ENCODE measurements at regions of chr11 and their contacts with region 1.

Region 1: DNA sequence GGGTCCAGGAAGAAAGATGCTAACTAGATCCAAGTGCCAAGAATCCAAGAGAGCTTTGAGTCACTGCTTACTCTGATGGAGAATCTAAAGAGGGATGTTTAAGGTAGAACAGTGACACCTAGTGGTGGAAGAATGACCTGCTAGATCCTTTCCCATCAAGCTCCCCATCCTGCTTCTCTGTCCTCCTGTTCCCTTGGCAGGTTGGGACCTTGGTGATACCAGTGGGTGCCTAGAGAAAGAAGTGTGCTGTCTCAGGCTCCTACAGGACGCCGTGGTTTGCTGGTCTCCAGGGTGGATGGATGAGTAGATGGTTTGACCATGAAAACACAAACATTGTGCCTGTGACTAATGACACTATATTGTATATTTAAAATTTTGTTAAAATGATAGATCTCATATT is 383.7 kb downstream of the TMEM135 start:
- DNase-seq: no peak
- H3K4me3 ChIP-seq: no peak overlapping the region
- H3K27ac ChIP-seq: no peak overlapping the region
- H3K4me1 ChIP-seq: no peaks in the 10 kb centered on the region
- H3K27me3 ChIP-seq: no peaks in the 10 kb centered on the region
- CTCF ChIP-seq: peak; percentile 58 to 78 (median 68)
- EP300 ChIP-seq: no peak
- POLR2A ChIP-seq: no peak

Region 2: GRCh38 chr11:86869966-86870570 is 551.4 kb before region 1 on chr11:
- intact Hi-C with region 1: loop called (anchors 5 kb)
- DNase-seq: peak; percentile 81
- H3K4me3 ChIP-seq: no peak overlapping the region
- H3K27ac ChIP-seq: no peak overlapping the region
- H3K4me1 ChIP-seq: no peaks in the 10 kb centered on the region
- H3K27me3 ChIP-seq: no peaks in the 10 kb centered on the region
- CTCF ChIP-seq: peak; percentile 59 to 69 (median 62)
- EP300 ChIP-seq: no peak
- POLR2A ChIP-seq: no peak

Region 3: GRCh38 chr11:87352759-87353707 is 68.4 kb before region 1 on chr11:
- intact Hi-C with region 1: loop called (anchors 2 kb)
- DNase-seq: peak; percentile 88
- H3K4me3 ChIP-seq: no peak overlapping the region
- H3K27ac ChIP-seq: no peak overlapping the region
- H3K4me1 ChIP-seq: peaks cover 0 to 21% (median 11%) of the 10 kb centered on the region in 4 donors
- H3K27me3 ChIP-seq: no peaks in the 10 kb centered on the region
- CTCF ChIP-seq: peak; percentile 93 to 99 (median 98)
- EP300 ChIP-seq: no peak
- POLR2A ChIP-seq: no peak

Region 4: DNA sequence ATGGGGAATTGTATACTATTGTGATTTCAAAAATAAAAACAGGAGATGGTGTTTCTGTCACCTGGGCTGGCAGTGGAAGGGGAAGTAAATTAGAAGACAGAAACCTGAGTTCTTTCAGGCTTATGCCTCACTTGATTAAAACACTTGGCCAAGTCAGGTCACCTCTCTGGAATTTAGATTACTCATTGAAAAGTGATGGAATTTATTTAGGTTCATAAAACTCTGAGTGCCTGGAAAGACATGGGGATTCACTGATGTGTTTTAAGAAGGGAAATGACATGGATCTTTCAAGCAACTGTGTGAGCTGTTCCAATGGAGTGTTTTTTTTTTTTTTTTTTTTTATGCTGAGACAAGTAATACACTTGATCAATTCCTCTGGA is 16.4 kb after region 1 on chr11:
- intact Hi-C with region 1: no loop called
- DNase-seq: no peak
- H3K4me3 ChIP-seq: no peak overlapping the region
- H3K27ac ChIP-seq: no peak overlapping the region
- H3K4me1 ChIP-seq: peaks cover 0 to 23% (median 5%) of the 10 kb centered on the region in 4 donors
- H3K27me3 ChIP-seq: no peaks in the 10 kb centered on the region
- CTCF ChIP-seq: no peak
- EP300 ChIP-seq: no peak
- POLR2A ChIP-seq: no peak

Measured in sigmoid colon (tissue), 7 donors.